ENCODE measurements at regions of chr12 and their contacts with region 1.

Region 1: DNA sequence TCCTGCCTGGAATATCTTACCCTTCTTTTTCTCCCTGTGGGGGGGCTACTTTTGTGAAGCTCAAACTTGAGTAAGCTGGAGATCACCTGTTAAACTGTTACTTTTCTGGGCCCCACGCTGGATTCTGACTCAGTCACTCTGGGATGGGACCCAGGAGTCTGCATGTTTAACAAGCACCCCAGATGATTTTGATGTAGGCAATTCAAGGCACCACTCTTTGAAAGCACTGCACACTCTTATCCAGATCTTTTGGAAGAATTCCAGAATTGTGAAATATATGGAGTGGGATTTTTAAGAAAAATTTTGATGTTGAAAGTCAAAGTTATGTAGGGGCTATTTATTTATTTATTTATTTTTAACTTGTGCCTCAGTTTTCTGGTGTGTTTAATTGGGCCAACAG is 46.3 kb upstream of the IGF1 start:
- DNase-seq: no peak
- ATAC-seq: no peak
- H3K4me3 ChIP-seq: no peak overlapping the region
- H3K4me3 Mint-ChIP-seq: no peak overlapping the region
- H3K27ac ChIP-seq: no peak overlapping the region
- H3K27ac Mint-ChIP-seq: no peak overlapping the region
- H3K4me1 ChIP-seq: no peaks in the 10 kb centered on the region
- H3K4me1 Mint-ChIP-seq: no peaks in the 10 kb centered on the region
- H3K27me3 ChIP-seq: peaks cover 0 to 3% of the 10 kb centered on the region in 2 experiments
- H3K27me3 Mint-ChIP-seq: peaks cover 0 to 12% of the 10 kb centered on the region in 2 donors

Region 2: GRCh38 chr12:102201436-102202061 is 325.2 kb before region 1 on chr12:
- CTCF ChIA-PET with region 1: no interaction called
- POLR2A ChIA-PET with region 1: interaction called in 1 of 2 experiments, 13 read pairs
- DNase-seq: no peak
- ATAC-seq: no peak
- H3K4me3 ChIP-seq: no peak overlapping the region
- H3K4me3 Mint-ChIP-seq: no peak overlapping the region
- H3K27ac ChIP-seq: no peak overlapping the region
- H3K27ac Mint-ChIP-seq: no peak overlapping the region
- H3K4me1 ChIP-seq: no peaks in the 10 kb centered on the region
- H3K4me1 Mint-ChIP-seq: peaks cover 0 to 2% (median 0%) of the 10 kb centered on the region in 3 donors
- H3K27me3 ChIP-seq: no peaks in the 10 kb centered on the region
- H3K27me3 Mint-ChIP-seq: no peaks in the 10 kb centered on the region